HEK293 (cell line): ENCODE measurements at regions of chr7 and their contacts with region 1.

Region 1: DNA sequence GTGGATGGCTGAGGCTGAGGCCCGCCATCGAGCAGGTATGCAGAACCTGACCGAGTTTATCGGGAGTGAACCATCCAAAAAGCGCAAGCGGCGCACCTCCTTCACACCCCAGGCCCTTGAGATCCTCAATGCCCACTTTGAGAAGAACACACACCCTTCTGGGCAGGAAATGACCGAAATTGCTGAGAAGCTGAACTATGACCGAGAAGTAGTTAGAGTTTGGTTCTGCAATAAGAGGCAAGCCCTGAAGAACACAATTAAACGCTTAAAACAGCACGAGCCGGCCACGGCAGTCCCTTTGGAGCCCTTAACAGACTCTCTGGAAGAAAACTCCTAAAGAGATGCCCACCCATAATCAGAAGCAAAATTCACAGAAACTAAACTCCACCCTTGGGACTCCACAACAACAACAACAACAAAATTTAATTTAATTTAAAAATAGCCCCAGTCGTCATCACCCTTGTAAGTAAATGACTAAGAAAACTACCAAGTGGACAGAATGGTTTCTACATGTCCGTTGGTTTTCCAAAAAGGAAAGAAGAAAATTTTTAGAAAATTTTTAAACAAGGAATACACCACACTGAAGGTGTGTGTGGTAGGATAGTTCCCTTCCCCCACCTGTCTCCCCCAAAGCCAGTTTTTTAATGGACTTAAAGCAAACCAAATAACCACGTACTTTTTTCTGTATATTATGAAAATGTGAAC is 101.7 kb upstream of the YAE1 start:
- H3K4me3 ChIP-seq: no peak overlapping the region
- H3K27ac ChIP-seq: no peak overlapping the region
- H3K4me1 ChIP-seq: no peaks in the 10 kb centered on the region
- CTCF ChIP-seq: no peak

Region 2: GRCh38 chr7:38932509-38933168 is 531.9 kb before region 1 on chr7:
- CTCF ChIA-PET with region 1: interaction called, 13 read pairs
- POLR2A ChIA-PET with region 1: no interaction called
- H3K4me3 ChIP-seq: no peak overlapping the region
- H3K27ac ChIP-seq: no peak overlapping the region
- H3K4me1 ChIP-seq: no peaks in the 10 kb centered on the region
- CTCF ChIP-seq: peak; percentile 50; the same call in 1 of the 2 replicates

Region 3: DNA sequence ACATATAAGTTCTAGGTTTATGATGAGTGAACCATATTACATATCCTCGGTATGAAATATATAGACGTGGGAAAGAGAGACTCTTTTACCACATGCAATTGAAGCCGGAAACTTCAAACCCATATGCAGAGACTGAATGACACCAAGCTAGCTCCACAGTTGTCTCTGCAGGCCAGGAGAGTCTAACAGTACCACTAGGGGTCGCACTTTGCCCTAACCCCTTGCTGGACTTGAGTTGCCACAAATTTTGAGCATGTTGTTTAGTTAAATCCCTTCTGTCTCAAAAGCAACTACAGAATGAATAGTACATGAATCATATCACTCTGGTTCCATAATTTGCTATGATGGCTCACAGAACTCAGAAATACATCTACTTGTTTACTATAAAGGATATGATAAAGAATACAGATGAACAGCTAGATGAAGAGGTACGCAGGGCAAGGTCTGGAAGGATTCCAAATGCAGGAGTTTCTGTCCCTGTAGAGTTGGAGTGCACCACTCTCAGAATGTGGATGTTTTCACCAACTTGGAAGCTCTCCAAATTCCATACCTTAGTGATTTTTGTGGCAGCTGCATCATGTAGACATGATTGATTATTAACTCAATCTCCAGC is 10.7 kb before region 1 on chr7:
- CTCF ChIA-PET with region 1: interaction called, 47 read pairs
- POLR2A ChIA-PET with region 1: no interaction called
- H3K4me3 ChIP-seq: no peak overlapping the region
- H3K27ac ChIP-seq: no peak overlapping the region
- H3K4me1 ChIP-seq: no peaks in the 10 kb centered on the region
- CTCF ChIP-seq: no peak